ENCODE measurements at regions of chr3 and their contacts with region 1.

Region 1: GRCh38 chr3:88509582-88509981 is 359.8 kb downstream of the C3orf38 start:
- DNase-seq: no peak
- ATAC-seq: no peak
- H3K4me3 ChIP-seq: no peak overlapping the region
- H3K27ac ChIP-seq: no peak overlapping the region
- H3K4me1 ChIP-seq: no peaks in the 10 kb centered on the region
- H3K27me3 ChIP-seq: no peaks in the 10 kb centered on the region
- CTCF ChIP-seq: no peak
- EP300 ChIP-seq: no peak
- POLR2A ChIP-seq: no peak
- RAD21 ChIP-seq: no peak

Region 2: DNA sequence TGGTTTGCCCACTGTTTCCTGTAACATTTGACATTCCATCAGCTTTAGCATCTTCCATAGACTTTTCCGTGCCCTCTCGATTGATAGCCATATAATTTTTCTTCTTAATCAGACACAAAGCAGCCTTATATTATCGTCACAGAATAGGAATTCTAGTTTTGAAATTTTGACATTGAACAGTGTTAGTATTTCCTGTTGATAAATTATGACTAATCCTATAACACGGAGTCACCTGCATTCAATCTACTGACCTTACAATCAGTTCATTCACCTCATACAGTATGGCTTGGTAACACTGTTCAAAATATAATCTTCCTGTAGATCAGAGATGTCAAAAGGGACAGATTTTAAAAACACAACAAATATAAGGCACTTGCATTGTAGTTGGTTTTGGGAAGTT is 63.9 kb after region 1 on chr3:
- CTCF ChIA-PET with region 1: no interaction called
- POLR2A ChIA-PET with region 1: no interaction called
- RAD21 ChIA-PET with region 1: no interaction called
- SMC1A ChIA-PET with region 1: no interaction called
- in situ Hi-C with region 1: loop called (anchors 10 kb)
- intact Hi-C with region 1: no loop called
- DNase-seq: no peak
- ATAC-seq: no peak
- H3K4me3 ChIP-seq: no peak overlapping the region
- H3K27ac ChIP-seq: no peak overlapping the region
- H3K4me1 ChIP-seq: no peaks in the 10 kb centered on the region
- H3K27me3 ChIP-seq: no peaks in the 10 kb centered on the region
- CTCF ChIP-seq: no peak
- EP300 ChIP-seq: no peak
- POLR2A ChIP-seq: no peak
- RAD21 ChIP-seq: no peak